Posterior cingulate gyrus (tissue), 11 donors: ENCODE measurements at regions of chr1 and their contacts with region 1.

Region 1: DNA sequence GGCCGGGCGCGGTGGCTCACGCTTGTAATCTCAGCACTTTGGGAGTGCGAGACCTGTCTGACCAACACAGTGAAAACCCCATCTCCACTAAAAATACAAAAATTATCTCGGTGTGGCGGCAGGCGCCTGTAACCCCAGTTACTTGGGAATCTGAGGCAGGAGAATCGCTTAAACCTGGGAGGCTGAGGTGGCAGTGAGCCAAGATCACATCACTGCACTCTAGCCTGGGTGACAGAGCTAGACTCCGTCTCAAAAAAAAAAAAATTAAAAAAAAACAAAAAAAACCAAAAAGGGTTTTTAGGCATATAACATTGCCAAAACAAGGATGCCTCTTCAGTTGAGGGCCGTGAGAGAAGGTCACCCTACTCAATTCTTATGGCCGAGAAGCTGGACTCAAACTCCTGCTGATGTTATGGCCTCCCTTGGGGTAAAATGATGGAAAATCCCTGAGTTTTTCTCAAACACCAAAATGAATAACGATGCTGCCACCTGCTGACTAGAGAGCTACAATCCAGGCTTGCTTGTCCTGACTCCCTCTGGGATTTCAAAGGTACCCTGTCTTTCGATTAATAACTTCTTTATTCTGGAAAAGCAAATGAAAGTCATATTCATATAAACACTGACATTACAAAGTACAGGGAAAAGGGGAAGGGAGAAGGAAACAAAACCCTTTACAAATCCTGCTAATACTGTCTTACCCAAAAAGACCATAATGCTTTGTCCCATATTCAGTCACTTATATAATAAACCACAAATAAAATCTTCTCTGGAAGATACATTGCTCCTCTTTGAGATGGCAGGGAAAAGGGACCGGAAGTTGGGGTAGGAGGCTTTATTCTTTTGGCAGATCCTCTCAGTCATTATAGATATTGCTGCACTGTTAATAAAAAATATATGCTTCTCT is 10.7 kb downstream of the RAB42 start:
- DNase-seq: peak in 6 of 10 donors; percentile 55 to 84 (median 66)

Region 2: DNA sequence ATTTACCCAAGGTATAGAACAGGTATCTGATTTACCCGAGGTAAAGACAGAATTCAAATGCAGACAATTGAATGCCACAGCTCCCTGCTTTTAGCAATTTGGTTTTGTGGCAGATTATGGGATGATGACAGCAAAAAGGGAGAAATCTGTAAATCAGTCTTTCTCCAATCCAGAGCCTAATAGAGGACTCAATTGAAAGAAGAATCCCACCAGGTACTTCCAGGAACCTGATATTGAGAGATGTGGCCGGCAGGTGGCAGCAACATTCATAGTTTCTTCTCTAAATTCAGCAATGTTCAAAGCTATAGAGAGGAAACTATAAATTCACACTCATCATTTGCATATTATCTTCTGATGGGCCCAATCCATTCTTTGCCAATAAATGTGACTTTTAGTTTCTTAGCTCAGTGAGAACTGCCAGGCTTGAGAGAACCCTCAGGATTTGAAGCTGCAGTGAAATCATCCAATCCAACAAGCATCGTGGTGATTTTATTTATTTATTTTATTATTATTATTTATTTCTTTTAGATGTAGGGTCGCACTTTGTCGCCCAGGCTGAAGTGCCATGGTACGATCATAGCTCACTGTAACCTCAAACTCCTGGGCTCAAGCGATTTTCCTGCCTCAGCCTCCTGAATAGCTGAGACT is 243.1 kb before region 1 on chr1:
- intact Hi-C with region 1: loop called (anchors 5 kb)
- DNase-seq: peak; percentile 19 to 93 (median 72)

Region 3: GRCh38 chr1:28518000-28518744 is 84.6 kb before region 1 on chr1:
- intact Hi-C with region 1: loop called (anchors 1 kb)
- DNase-seq: peak; percentile 76 to 98 (median 86)